Endothelial cell of umbilical vein (primary cell): ENCODE measurements at regions of chr20 and their contacts with region 1.

Region 1: DNA sequence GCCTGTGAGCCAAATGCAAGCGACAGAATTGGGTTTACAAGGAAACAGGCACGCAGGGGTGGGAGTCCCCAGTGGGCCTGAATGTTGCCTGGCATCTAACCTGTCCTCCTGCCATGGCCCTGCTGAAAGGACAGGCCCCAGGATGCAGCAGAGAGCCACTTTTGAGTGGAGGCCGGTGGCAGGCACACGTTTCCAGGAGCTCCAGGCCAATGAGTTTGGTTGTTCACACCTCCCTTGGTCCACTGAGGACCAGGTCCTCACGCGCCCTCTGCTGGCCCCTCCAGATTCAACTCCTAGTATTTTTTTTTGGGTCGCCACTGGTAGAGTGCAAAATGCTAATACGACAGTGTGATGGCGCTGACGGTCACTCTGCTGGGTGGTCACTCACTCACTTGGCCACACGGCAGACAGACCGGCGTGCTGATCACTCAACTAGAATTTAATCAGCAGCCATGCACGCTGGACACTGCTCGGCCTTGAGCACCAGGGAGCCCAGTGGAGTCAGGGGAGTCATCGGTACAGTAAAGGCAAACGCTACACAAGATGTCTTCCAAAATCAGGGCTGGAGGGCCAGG is 81.7 kb upstream of the NFATC2 start:
- DNase-seq: peak; percentile 81
- H3K4me3 ChIP-seq: no peak overlapping the region
- H3K27ac ChIP-seq: peak overlapping the region; percentile 41
- H3K4me1 ChIP-seq: peaks cover 14% of the 10 kb centered on the region
- H3K27me3 ChIP-seq: no peaks in the 10 kb centered on the region
- CTCF ChIP-seq: peak; percentile 82 to 84
- POLR2A ChIP-seq: no peak

Region 2: GRCh38 chr20:51608061-51608460 is 16.2 kb before region 1 on chr20:
- CTCF ChIA-PET with region 1: interaction called, 14 read pairs
- POLR2A ChIA-PET with region 1: no interaction called
- dilution Hi-C with region 1: no loop called
- intact Hi-C with region 1: no loop called
- DNase-seq: no peak
- H3K4me3 ChIP-seq: no peak overlapping the region
- H3K27ac ChIP-seq: no peak overlapping the region
- H3K4me1 ChIP-seq: no peaks in the 10 kb centered on the region
- H3K27me3 ChIP-seq: no peaks in the 10 kb centered on the region
- CTCF ChIP-seq: no peak
- POLR2A ChIP-seq: no peak